Gastrocnemius medialis (tissue), 4 donors: ENCODE measurements at regions of chr15 and their contacts with region 1.

Region 1: GRCh38 chr15:64046347-64047153 is at the start of gene DAPK2:
- DNase-seq: peak; percentile 49 to 71
- ATAC-seq: peak; percentile 73 to 77
- H3K4me3 ChIP-seq: peak within 1 kb of the TSS; percentile 73 to 83 (median 81)
- H3K27ac ChIP-seq: peak within 1 kb of the TSS; percentile 87 to 93 (median 91)
- H3K4me1 ChIP-seq: peaks cover 32 to 45% of the 10 kb centered on the region in 2 donors
- H3K27me3 ChIP-seq: no peaks in the 10 kb centered on the region
- CTCF ChIP-seq: peak; percentile 76 to 98 (median 90)
- POLR2A ChIP-seq: peak; percentile 68 to 73
- total RNA-seq, gene DAPK2: 28.5 to 70.8 (median 52.7) TPM

Region 2: DNA sequence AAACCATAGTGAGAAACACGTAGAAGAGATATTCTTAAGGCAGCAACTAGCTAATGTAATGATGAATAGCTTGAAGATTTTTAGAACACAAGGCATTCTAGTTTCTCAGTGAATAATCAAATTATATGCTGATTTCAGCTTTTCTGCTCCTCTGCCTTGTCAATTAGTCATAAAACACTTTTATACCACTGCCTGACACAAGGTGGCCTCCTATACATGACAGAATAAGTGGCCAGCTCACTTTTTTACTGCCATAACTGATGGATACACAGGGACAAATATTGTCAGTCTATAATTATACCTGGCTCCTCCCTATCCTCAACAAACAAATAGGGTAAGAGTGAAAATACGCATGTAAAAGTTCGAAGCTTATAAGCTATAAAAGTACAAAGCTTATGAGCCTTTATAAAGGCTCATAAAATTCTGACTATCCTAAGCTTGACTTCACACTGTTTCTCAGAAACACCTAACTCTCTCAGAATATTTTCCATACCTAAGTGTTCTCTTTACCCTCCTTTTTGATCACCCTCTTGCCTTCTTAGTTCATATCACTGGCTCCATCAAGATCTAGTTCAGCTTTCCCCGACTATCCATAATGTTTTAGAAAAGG is 294.4 kb before region 1 on chr15:
- in situ Hi-C with region 1: no loop called
- intact Hi-C with region 1: loop called (anchors 1 kb)
- DNase-seq: peak in 1 of 2 donors; percentile 27
- ATAC-seq: peak; percentile 90 to 91
- H3K4me3 ChIP-seq: no peak overlapping the region
- H3K27ac ChIP-seq: peak overlapping the region; percentile 29 to 66 (median 50)
- H3K4me1 ChIP-seq: peaks cover 0 to 13% of the 10 kb centered on the region in 2 donors
- H3K27me3 ChIP-seq: no peaks in the 10 kb centered on the region
- CTCF ChIP-seq: peak; percentile 77 to 82 (median 79)
- POLR2A ChIP-seq: no peak

Region 3: GRCh38 chr15:63833021-63833696 is 213.4 kb before region 1 on chr15:
- in situ Hi-C with region 1: no loop called
- intact Hi-C with region 1: loop called (anchors 2 kb)
- DNase-seq: peak; percentile 5 to 46
- ATAC-seq: peak; percentile 53 to 68
- H3K4me3 ChIP-seq: peak overlapping the region; percentile 83 to 95 (median 90)
- H3K27ac ChIP-seq: peak overlapping the region; percentile 90 to 98 (median 96)
- H3K4me1 ChIP-seq: peaks cover 24 to 35% of the 10 kb centered on the region in 2 donors
- H3K27me3 ChIP-seq: no peaks in the 10 kb centered on the region
- CTCF ChIP-seq: no peak
- POLR2A ChIP-seq: no peak

Region 4: GRCh38 chr15:63891079-63891767 is 155.3 kb before region 1 on chr15:
- in situ Hi-C with region 1: loop called in 1 of 4 experiments (anchors 25 kb)
- intact Hi-C with region 1: loop called (anchors 2 kb)
- DNase-seq: peak; percentile 39 to 79
- ATAC-seq: peak; percentile 27 to 39
- H3K4me3 ChIP-seq: no peak overlapping the region
- H3K27ac ChIP-seq: peak overlapping the region in 3 of 4 donors; percentile 15 to 93 (median 35)
- H3K4me1 ChIP-seq: peaks cover 58 to 66% of the 10 kb centered on the region in 2 donors
- H3K27me3 ChIP-seq: no peaks in the 10 kb centered on the region
- CTCF ChIP-seq: peak; percentile 80 to 87 (median 83)
- POLR2A ChIP-seq: no peak

Region 5: DNA sequence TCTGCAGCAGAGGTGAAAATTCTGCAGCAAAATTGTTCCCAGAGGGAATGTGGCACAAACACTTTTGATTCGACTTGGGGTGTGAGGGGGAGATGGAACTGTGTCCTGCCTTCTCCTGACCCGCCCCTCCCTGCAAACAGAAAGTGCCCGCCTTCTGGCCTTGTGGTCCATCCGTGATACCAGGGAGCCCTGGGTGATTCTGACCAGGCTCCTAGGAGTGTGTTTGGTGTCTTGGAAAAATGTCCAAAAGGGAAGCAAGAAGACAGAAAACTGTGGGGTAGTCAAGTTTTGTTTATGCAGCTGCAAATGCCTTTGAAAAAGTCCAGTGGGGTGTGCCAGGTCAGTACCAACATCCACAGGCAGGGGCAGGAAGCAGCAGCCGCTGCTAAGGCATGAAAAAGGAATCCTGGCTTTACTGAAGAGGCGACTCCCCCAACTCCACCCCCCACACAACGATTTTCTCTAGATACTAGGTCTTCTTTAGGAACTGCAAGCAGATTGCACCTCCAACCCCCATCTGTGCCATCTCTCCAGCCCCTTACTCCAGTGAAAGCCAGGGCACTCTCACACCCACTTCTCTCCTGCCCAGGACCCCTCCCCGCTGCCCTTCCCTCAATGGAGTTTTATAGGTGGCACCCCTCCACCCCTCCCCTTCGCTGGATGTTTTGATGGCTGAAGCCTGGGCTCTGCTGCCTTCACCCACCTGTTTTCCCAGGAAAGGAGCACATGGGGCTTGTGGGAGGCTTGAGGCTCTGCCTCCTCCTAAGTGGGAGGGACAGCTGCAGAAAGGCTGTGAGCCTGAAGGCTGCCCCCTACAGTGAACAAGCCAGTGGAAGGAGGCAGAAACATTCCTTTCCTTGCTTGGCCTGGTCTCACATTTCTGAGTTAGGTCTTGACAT is 130.4 kb before region 1 on chr15:
- in situ Hi-C with region 1: no loop called
- intact Hi-C with region 1: loop called (anchors 2 kb)
- DNase-seq: no peak
- ATAC-seq: peak; percentile 9 to 47
- H3K4me3 ChIP-seq: no peak overlapping the region
- H3K27ac ChIP-seq: peak overlapping the region; percentile 68 to 79 (median 73)
- H3K4me1 ChIP-seq: peaks cover 37 to 39% of the 10 kb centered on the region in 2 donors
- H3K27me3 ChIP-seq: no peaks in the 10 kb centered on the region
- CTCF ChIP-seq: peak; percentile 7 to 64 (median 56)
- POLR2A ChIP-seq: no peak

Region 6: DNA sequence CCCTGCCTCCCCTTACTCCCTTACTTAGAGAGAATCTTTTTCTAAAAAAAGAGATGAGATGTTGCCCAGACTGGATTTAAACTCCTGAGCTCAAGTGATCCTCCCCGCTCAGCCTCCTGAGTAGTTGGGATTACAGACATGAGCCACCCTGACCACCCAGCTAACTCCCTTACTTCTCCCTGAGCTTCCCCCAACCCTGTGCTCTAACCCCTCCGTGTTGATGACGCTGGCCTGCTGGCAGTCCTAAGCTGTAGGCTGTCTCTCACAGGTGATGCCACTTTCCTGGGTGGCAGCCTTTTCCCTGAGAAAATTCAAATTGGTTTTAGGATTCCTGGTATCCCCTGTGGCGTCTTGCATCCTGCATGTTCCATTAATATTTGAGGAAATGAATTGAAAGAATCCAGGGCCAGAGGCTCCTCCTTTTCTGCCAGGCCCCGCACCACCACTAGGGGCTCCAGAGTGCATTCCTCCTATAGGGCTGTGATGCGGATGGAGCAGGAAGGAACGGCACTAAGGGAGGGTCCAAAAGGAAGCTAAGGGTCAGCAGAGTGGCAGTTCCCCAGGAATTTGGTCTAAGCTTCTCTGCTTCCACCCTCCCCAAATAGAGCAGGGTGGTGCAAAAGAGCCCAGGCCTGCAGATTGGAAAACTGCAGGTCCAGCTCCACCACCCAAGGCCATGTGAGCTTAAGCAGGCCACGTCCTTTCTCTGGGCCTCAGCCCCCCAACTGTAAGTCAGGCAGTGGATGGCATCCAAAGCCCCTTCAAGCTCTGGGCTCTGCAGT is 101.4 kb before region 1 on chr15:
- in situ Hi-C with region 1: loop called in 1 of 4 experiments (anchors 10 kb)
- intact Hi-C with region 1: loop called (anchors 1 kb)
- DNase-seq: peak; percentile 38 to 61
- ATAC-seq: peak; percentile 53 to 65
- H3K4me3 ChIP-seq: no peak overlapping the region
- H3K27ac ChIP-seq: peak overlapping the region; percentile 24 to 75 (median 48)
- H3K4me1 ChIP-seq: peaks cover 18 to 20% of the 10 kb centered on the region in 2 donors
- H3K27me3 ChIP-seq: no peaks in the 10 kb centered on the region
- CTCF ChIP-seq: peak; percentile 76 to 90 (median 82)
- POLR2A ChIP-seq: no peak

Region 7: GRCh38 chr15:63969652-63970421 is 76.7 kb before region 1 on chr15:
- in situ Hi-C with region 1: no loop called
- intact Hi-C with region 1: loop called (anchors 5 kb)
- DNase-seq: peak in 1 of 2 donors; percentile 39
- ATAC-seq: no peak
- H3K4me3 ChIP-seq: no peak overlapping the region
- H3K27ac ChIP-seq: peak overlapping the region; percentile 87 to 93 (median 91)
- H3K4me1 ChIP-seq: peaks cover 97 to 100% of the 10 kb centered on the region in 2 donors
- H3K27me3 ChIP-seq: no peaks in the 10 kb centered on the region
- CTCF ChIP-seq: no peak
- POLR2A ChIP-seq: no peak

Region 8: DNA sequence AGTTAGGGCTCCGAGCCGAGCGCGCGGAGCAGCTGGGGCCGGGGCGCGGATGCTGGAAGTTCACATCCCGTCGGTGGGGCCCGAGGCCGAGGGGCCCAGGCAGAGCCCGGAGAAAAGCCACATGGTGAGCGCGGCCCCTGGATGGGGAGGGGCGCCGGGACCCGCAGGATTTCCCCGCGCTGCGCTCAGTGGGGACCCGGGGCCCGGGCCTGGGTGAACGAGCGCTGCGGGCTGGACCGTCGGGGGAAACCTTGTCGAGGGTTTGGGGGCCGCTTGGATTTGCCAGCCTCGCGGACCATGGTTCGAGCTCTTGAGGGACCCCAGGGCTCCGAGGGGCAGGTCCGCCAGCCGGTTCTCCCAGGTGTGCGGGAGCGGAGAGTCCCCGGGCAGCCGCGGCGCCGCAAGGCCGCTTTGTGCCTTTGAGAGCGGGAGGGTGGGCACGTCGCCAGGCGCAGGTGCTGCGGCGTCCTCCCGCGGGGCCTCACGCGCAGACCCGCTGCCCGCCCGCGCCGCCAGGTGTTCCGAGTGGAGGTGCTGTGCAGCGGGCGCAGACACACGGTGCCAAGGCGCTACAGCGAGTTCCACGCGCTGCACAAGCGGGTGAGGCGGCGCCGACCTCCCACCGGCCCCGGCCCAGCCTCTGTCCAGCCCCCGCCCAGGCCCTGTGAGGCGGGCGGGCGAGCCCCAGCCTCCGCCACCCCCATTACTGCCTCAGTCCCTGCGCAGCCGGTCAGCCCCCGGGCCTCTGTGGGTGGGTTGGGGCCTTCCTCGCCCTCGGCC is 105.4 kb after region 1 on chr15 and contains the start of gene SNX22:
- in situ Hi-C with region 1: no loop called
- intact Hi-C with region 1: no loop called
- DNase-seq: no peak
- ATAC-seq: no peak
- H3K4me3 ChIP-seq: peak within 1 kb of the TSS; percentile 39 to 53 (median 48)
- H3K27ac ChIP-seq: no peak within 1 kb of the TSS
- H3K4me1 ChIP-seq: peaks cover 16 to 27% of the 10 kb centered on the region in 2 donors
- H3K27me3 ChIP-seq: peaks cover 12 to 19% (median 18%) of the 10 kb centered on the region in 3 donors
- CTCF ChIP-seq: no peak
- POLR2A ChIP-seq: no peak
- total RNA-seq, gene SNX22: 0.09 to 0.87 TPM in 2 of 4 donors, not detected in the others